H1 (cell line): ENCODE measurements at regions of chr14 and their contacts with region 1.

Region 1: DNA sequence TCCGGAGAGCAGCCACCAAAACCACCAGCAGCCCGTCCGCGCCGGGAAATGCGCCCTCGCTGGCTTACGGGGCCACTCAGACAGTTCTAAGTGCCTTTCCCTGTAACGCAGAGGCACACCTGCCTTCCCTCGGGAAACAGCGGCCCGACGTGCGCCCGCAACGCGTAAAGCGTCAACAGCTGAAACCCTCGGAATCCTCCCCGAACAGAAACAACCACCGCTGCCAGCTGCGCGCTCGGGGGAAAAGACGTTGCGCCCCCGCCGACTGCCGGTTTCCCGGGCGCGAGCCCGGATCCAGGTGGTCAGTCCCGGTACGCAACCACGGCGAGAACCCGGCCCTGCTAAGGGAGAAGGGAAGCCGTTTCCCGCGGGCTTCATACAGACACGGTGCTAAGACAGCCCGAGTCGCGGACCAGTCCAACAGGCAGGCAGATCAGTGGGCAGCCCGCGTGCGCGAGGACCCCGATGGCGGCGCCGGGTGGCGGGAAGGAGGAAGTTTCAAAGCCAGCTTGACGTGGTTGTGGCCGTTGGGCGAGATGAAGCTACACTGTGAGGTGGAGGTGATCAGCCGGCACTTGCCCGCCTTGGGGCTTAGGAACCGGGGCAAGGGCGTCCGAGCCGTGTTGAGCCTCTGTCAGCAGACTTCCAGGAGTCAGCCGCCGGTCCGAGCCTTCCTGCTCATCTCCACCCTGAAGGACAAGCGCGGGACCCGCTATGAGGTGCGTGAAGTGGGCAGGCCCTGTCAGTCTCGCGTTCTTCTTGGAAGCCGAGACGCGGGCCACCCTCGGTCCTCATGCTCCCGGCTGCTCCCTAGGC is at the start of gene LRR1:
- DNase-seq: peak in 1 of 2 experiments; percentile 96
- H3K4me3 ChIP-seq: peak within 1 kb of the TSS; percentile 61 to 98 (median 92)
- H3K27ac ChIP-seq: peak within 1 kb of the TSS; percentile 95
- H3K4me1 ChIP-seq: 0 out of 7 replicates have a peak, but pooled peaks cover 0 to 2% (median 0%) of the 10 kb centered on the region in 4 experiments
- H3K27me3 ChIP-seq: no peaks in the 10 kb centered on the region
- CTCF ChIP-seq: no peak
- EP300 ChIP-seq: no peak
- POLR2A ChIP-seq: peak; percentile 45 to 96
- RAD21 ChIP-seq: no peak
- total RNA-seq, gene LRR1: 37.5 and 37.7 TPM in 2 replicates

Region 2: DNA sequence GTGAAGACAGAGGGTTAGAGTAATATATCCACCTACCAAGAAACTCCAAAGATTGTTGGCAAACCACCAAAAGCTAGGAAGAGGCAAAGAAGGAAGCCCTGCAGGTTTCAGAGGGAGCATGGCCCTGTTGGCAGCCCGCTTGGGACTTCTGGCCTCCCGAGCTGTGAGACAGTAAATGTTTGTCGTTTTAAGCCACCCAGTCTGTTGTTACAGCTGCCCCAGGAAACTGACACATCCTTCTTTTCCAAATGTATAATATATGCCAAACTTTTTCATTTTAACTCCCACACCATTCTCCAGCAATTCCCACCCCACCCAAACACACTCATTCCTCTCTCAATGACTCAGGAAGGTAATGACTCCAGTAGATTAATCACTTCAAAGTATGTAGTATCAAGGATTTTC is 86.5 kb before region 1 on chr14:
- CTCF ChIA-PET with region 1: no interaction called
- POLR2A ChIA-PET with region 1: no interaction called
- DNase-seq: no peak
- H3K4me3 ChIP-seq: no peak overlapping the region
- H3K27ac ChIP-seq: no peak overlapping the region
- H3K4me1 ChIP-seq: no peaks in the 10 kb centered on the region
- H3K27me3 ChIP-seq: no peaks in the 10 kb centered on the region
- CTCF ChIP-seq: no peak
- EP300 ChIP-seq: no peak
- POLR2A ChIP-seq: no peak
- RAD21 ChIP-seq: no peak

Region 3: GRCh38 chr14:49614196-49614595 is 15.5 kb after region 1 on chr14:
- CTCF ChIA-PET with region 1: interaction called, 3 read pairs
- POLR2A ChIA-PET with region 1: interaction called, 10 read pairs
- DNase-seq: no peak
- H3K4me3 ChIP-seq: no peak overlapping the region
- H3K27ac ChIP-seq: no peak overlapping the region
- H3K4me1 ChIP-seq: no peaks in the 10 kb centered on the region
- H3K27me3 ChIP-seq: no peaks in the 10 kb centered on the region
- CTCF ChIP-seq: no peak
- EP300 ChIP-seq: no peak
- POLR2A ChIP-seq: no peak
- RAD21 ChIP-seq: no peak

Region 4: GRCh38 chr14:49620182-49621113 is 21.8 kb after region 1 on chr14 and contains the starts of genes MGAT2 and RPL36AL:
- CTCF ChIA-PET with region 1: interaction called, 3 read pairs
- POLR2A ChIA-PET with region 1: interaction called, 40 read pairs
- DNase-seq: peak; percentile 92 to 97
- H3K4me3 ChIP-seq: peak within 1 kb of the TSS; percentile 80 to 99 (median 94)
- H3K27ac ChIP-seq: peak within 1 kb of the TSS; percentile 95
- H3K4me1 ChIP-seq: peaks cover 1 to 9% (median 3%) of the 10 kb centered on the region in 4 experiments; a peak in 3 of 7 replicates
- H3K27me3 ChIP-seq: no peaks in the 10 kb centered on the region
- CTCF ChIP-seq: peak in 1 of 3 experiments; percentile 7; a peak in 1 of 4 replicates
- EP300 ChIP-seq: no peak
- POLR2A ChIP-seq: peak; percentile 87 to 91
- RAD21 ChIP-seq: 0 out of 4 replicates have a peak, but pooled peaks of 1 of the 2 experiments have one; percentile 1
- total RNA-seq, gene MGAT2: 23.7 and 24.5 TPM in 2 replicates
- total RNA-seq, gene RPL36AL: 230 and 233 TPM in 2 replicates